AG04449 (cell line): ENCODE measurements at regions of chr1 and their contacts with region 1.

Region 1: GRCh38 chr1:212749821-212750535 is 41.6 kb downstream of the NSL1 start:
- DNase-seq: no peak
- H3K4me3 ChIP-seq: no peak overlapping the region
- CTCF ChIP-seq: peak; percentile 43

Region 2: DNA sequence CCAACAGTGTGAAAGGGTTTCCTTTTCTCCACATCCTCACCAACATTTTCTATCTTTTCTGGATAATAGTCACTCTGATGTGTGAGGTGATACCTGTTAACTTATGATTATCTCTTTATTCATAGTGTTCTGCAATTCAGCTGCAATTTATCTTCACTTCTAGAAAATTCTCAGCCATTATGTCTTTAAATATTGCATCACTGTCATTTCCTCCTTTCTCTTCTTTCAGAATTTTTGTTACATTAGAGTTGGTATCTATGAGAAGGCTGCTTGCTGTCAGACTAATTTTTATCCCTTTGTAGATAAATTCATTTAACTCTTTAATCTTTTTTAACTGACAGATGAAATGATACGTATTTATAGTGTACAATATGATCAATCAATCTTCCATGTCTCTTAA is 171.9 kb before region 1 on chr1:
- CTCF ChIA-PET with region 1: no interaction called
- POLR2A ChIA-PET with region 1: no interaction called
- DNase-seq: no peak
- H3K4me3 ChIP-seq: no peak overlapping the region
- CTCF ChIP-seq: no peak

Region 3: DNA sequence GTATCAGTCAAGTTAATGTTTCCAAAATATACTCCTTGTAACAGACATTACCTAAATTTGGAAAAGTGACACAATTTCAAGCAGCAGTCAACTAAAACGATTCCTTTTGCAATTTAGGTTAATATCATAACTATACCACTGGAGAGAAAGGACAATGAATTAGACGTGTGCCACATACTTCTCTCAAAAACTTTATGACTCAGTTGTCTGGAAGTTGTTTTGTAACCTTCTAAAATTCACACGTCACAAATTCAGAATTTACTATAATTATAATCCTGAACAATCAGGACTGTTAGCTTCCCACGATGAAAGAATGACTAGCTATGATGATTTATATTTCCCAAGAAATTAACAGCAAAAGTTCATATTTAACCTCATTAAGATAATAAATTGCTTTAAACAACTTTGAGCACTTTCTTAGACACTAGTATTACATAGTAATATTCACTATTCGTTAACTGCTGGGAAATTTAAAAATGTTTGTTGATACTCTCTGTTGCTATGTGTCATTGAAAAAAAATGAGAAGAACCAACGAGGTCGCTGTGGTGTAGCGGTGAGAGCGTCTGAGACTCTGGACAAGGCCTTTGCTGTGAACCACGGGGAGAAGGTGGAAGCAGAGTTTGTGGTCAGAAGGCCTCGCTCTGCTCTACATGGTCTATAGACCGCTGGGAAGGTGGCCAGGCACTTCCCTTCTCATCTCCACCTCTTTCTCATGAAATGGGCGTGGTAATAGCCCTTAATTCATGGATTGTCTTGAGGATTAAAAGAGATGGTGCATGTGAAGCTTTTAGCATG is 22.4 kb before region 1 on chr1:
- CTCF ChIA-PET with region 1: interaction called, 11 read pairs
- POLR2A ChIA-PET with region 1: interaction called, 3 read pairs
- DNase-seq: peak; percentile 12
- H3K4me3 ChIP-seq: no peak overlapping the region
- CTCF ChIP-seq: no peak

Region 4: GRCh38 chr1:212760126-212760823 is 10.3 kb after region 1 on chr1:
- CTCF ChIA-PET with region 1: interaction called, 18 read pairs
- POLR2A ChIA-PET with region 1: no interaction called
- DNase-seq: no peak
- H3K4me3 ChIP-seq: no peak overlapping the region
- CTCF ChIP-seq: peak; percentile 29

Region 5: DNA sequence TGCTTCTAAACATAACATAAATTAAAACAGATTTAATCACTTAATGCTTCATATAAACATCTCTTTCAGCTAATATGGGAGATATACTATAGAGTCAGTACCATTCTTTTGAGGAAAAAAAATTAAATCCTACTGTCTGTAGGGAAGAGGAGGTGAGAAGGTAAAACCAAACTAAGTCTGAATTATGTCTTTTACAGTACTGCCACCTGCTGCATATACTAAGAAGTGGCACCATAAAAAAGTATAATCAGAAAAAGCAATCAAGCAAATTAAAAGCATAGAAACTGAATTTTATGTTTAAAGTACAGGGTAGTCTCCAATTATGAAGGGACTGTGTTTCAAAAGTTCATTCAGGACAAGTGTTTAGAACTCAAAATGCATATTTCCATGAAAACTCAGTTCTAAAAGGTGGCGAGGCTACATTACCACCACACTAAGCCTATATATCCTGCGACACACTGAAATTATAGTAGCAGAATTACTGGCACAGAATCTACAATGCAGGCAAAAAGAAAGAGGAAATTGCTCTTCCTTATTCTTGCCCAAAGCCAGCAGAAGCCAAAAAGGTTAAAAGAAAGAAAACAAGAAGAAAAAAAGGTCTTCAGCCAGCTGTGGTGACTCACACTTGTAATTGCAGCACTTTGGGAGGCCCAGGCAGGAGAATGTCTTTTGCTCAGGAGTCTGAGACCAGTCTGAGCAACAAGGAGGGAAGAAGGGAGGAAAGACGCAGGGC is 32.6 kb after region 1 on chr1:
- CTCF ChIA-PET with region 1: interaction called, 25 read pairs
- POLR2A ChIA-PET with region 1: no interaction called
- DNase-seq: no peak
- H3K4me3 ChIP-seq: no peak overlapping the region
- CTCF ChIP-seq: peak; percentile 36

Region 6: DNA sequence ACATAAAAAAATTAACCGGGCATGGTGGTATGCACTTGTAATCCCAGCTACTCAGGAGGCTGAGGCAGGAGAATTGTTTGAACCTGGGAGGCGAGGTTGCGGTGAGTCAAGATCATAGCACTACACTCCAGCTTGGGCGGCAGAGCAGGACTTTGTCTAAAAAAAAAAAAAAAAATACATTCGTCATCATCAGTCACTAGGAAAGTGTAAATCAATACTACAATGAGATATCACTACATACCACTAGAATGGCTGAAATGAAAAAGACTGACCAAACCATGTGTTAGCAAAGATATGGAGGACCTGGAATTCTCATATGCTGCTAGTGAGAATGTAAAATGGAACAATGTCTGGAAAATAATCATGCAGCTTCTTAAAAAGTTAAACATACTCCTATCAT is 88.2 kb after region 1 on chr1:
- CTCF ChIA-PET with region 1: no interaction called
- POLR2A ChIA-PET with region 1: no interaction called
- DNase-seq: no peak
- H3K4me3 ChIP-seq: no peak overlapping the region
- CTCF ChIP-seq: no peak

Region 7: DNA sequence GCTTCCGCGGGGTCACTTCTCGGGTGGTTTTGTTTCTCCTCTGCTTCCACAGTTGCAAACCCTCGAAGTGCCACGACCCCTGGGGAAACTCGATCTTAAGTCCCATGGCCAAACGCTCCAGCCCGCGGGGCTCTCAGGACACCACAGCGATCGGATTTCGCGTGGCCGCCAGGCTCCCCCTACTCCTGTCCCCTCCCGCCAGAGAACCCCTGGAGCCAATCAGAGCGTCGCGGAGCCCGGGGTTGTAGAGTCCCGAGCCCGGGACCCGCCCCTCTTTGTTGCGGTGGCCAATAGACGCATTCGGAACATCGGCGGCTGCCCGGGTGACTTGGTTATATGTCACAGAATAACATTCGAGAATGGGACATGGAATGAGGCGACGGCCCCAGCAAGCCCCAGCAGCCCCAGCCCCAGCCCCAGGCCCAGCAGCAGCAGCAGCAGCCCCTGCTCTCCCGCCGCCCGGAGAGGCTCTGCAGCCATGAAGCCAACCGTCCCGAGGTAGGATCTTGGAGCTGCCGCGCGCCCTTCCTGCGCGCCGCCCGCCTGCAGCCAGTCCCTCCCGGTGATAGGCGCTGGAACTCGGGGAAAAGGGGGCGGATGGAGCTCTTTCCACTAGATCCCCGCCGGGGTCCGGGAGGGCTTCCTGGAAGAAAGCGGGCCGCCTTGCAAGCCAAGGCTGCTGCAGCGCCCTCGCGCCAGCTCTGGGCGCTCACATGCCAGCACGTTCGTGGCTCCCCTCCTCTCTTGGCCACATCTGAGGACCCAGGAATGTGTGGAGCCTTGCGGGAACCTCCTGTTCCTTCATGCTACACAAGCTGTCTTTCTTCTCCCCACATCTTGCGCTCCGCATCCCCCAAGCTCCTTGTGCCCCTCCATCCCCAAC is 200.5 kb after region 1 on chr1 and contains the start of gene VASH2:
- CTCF ChIA-PET with region 1: no interaction called
- POLR2A ChIA-PET with region 1: no interaction called
- DNase-seq: peak; percentile 7
- H3K4me3 ChIP-seq: peak within 1 kb of the TSS; percentile 63
- CTCF ChIP-seq: no peak